Calu3 (cell line): ENCODE measurements at regions of chr5 and their contacts with region 1.

Region 1: GRCh38 chr5:59810041-59810440 is 83.5 kb downstream of the PDE4D start:
- DNase-seq: peak; percentile 61
- H3K4me3 Mint-ChIP-seq: peak overlapping the region; percentile 58
- H3K27ac Mint-ChIP-seq: no peak overlapping the region
- H3K4me1 Mint-ChIP-seq: no peaks in the 10 kb centered on the region
- H3K27me3 Mint-ChIP-seq: peaks cover 25% of the 10 kb centered on the region
- CTCF ChIP-seq: peak; percentile 90

Region 2: DNA sequence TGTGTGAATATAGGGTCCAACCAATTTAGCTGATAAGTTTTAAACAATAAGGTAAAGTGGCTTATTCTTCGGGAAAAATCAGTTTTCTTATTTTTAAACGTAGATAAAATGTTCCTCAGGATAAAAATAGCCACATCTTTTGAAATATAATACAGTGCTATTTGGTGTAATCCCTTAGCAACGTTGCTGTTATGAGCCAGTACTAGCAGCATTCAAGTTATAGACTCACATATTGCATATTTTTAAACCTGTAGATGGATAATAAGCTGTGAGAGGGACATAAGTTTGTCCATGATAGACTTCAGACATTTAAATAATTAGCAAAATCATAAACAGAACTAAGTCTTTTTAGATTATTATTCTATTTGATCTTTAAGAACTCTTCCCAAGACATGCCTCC is 77.2 kb after region 1 on chr5:
- CTCF ChIA-PET with region 1: no interaction called
- intact Hi-C with region 1: no loop called
- DNase-seq: no peak
- H3K4me3 Mint-ChIP-seq: no peak overlapping the region
- H3K27ac Mint-ChIP-seq: no peak overlapping the region
- H3K4me1 Mint-ChIP-seq: no peaks in the 10 kb centered on the region
- H3K27me3 Mint-ChIP-seq: peaks cover 42% of the 10 kb centered on the region
- CTCF ChIP-seq: no peak

Region 3: DNA sequence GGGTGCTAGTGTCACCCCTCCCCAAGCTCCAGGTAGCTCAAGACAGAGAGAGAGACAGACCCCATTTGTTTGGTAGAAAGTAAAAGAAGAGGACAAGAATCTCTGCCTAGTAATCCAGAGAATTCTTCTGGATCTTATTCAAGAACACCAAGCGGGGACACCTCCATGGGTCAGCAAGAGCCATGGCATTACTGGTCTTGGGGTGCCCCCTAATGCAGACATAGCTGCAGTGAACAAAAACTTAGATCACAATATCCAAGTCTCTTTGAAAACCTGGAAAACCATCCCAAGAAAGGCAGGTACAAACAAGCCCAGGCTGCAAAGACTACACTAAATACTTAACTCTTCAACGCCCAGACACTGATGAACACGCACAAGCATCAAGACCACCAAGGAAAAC is 113.4 kb after region 1 on chr5:
- CTCF ChIA-PET with region 1: interaction called, 3 read pairs
- intact Hi-C with region 1: loop called (anchors 1 kb)
- DNase-seq: peak; percentile 9
- H3K4me3 Mint-ChIP-seq: no peak overlapping the region
- H3K27ac Mint-ChIP-seq: no peak overlapping the region
- H3K4me1 Mint-ChIP-seq: no peaks in the 10 kb centered on the region
- H3K27me3 Mint-ChIP-seq: peaks cover 25% of the 10 kb centered on the region
- CTCF ChIP-seq: no peak

Region 4: DNA sequence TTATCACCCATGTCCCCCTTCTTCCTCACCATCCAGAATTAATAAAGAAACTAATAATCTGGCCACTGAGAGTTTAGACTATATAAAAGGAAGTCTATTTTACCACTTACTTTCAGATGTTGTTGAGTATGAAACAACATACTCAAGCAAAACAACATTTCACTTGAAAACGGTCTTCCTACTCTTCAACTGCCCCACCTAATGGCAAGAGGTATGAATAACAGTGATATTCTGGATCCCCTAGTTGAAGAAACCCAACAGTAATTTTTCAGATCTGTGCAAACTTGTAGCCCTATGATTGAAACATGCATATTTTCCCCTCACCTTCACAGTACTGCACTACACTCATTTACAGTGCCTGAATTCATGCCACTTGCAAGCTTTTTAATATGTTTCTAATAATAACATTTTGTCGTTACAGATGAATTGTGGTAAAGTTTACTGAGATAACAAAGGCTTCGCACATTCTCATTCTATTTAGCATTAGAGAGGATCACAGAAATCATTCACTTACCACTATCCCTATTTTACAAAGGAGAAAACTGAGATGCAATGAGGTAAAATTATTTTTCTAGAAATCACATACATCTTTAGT is 351.4 kb after region 1 on chr5:
- CTCF ChIA-PET with region 1: no interaction called
- intact Hi-C with region 1: loop called (anchors 1 kb)
- DNase-seq: peak; percentile 25
- H3K4me3 Mint-ChIP-seq: no peak overlapping the region
- H3K27ac Mint-ChIP-seq: no peak overlapping the region
- H3K4me1 Mint-ChIP-seq: no peaks in the 10 kb centered on the region
- H3K27me3 Mint-ChIP-seq: no peaks in the 10 kb centered on the region
- CTCF ChIP-seq: peak; percentile 40

Region 5: DNA sequence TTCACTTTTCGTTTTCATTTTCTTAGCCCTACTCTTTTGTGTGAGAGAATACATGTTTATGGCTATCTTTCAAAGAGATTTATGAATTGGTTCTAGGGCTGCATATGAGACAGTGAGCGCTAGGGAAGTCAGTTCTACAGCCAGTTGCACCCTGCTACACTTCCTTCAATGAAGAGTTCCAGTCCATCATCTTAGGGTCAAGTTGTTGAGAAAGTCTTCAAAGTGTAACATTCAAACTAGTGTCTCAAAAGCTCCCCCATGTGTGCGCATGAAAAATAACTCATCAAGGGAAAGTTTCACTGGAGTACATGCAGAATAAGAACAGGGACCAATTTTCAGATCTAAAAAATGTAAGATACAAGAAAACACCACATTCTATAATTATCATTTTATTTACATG is 572.7 kb after region 1 on chr5:
- CTCF ChIA-PET with region 1: no interaction called
- intact Hi-C with region 1: loop called (anchors 1 kb)
- DNase-seq: peak; percentile 14
- H3K4me3 Mint-ChIP-seq: no peak overlapping the region
- H3K27ac Mint-ChIP-seq: no peak overlapping the region
- H3K4me1 Mint-ChIP-seq: no peaks in the 10 kb centered on the region
- H3K27me3 Mint-ChIP-seq: peaks cover 28% of the 10 kb centered on the region
- CTCF ChIP-seq: no peak

Region 6: GRCh38 chr5:60672693-60673264 is 862.7 kb after region 1 on chr5:
- CTCF ChIA-PET with region 1: no interaction called
- intact Hi-C with region 1: loop called (anchors 5 kb)
- DNase-seq: no peak
- H3K4me3 Mint-ChIP-seq: peak overlapping the region; percentile 22
- H3K27ac Mint-ChIP-seq: no peak overlapping the region
- H3K4me1 Mint-ChIP-seq: peaks cover 76% of the 10 kb centered on the region
- H3K27me3 Mint-ChIP-seq: no peaks in the 10 kb centered on the region
- CTCF ChIP-seq: no peak